Heart right ventricle (tissue), 16 donors: ENCODE measurements at regions of chr15 and their contacts with region 1.

Region 1: DNA sequence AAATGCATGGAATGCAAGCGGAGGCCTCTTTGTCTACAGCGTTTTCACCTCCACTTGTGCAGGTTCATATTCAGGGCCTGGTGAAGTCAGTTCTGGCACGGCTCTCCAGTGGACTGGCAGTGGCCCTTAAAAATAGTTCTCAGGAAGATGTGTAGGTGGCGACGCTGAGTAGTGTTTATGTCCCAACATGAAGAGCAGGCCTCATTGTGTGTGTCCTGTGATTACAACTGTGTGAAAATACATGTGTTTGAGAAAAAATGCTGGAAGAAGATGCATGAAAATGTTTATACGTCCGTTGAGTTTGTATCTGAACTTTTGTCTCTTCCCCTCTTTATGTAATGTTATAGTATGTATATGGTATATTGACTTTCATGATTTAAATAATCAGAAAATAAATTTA is 7.2 kb downstream of the LIPC start:
- DNase-seq: peak in 1 of 2 donors; percentile 65
- ATAC-seq: peak; percentile 56 to 89 (median 76)
- H3K4me3 ChIP-seq: no peak overlapping the region
- H3K27ac ChIP-seq: peak overlapping the region in 8 of 10 donors; percentile 75 to 89 (median 84)
- H3K4me1 ChIP-seq: peaks cover 23 to 47% (median 40%) of the 10 kb centered on the region in 9 donors
- H3K27me3 ChIP-seq: no peaks in the 10 kb centered on the region
- CTCF ChIP-seq: peak in 5 of 9 donors; percentile 30 to 57 (median 50)

Region 2: GRCh38 chr15:57994221-57995049 is 444.5 kb before region 1 on chr15:
- intact Hi-C with region 1: no loop called
- DNase-seq: no peak
- ATAC-seq: no peak
- H3K4me3 ChIP-seq: no peak overlapping the region
- H3K27ac ChIP-seq: no peak overlapping the region
- H3K4me1 ChIP-seq: no peaks in the 10 kb centered on the region
- H3K27me3 ChIP-seq: peaks cover 0 to 10% (median 0%) of the 10 kb centered on the region in 7 donors
- CTCF ChIP-seq: no peak

Region 3: GRCh38 chr15:58269455-58270414 is 169.2 kb before region 1 on chr15:
- intact Hi-C with region 1: loop called in 2 of 10 experiments (anchors 5 to 10 kb)
- DNase-seq: peak in 1 of 2 donors; percentile 56
- ATAC-seq: peak; percentile 77 to 96 (median 92)
- H3K4me3 ChIP-seq: no peak overlapping the region
- H3K27ac ChIP-seq: no peak overlapping the region
- H3K4me1 ChIP-seq: peaks cover 0 to 10% (median 0%) of the 10 kb centered on the region in 9 donors
- H3K27me3 ChIP-seq: no peaks in the 10 kb centered on the region
- CTCF ChIP-seq: peak; percentile 60 to 86 (median 79)

Region 4: GRCh38 chr15:58331903-58332675 is 106.9 kb before region 1 on chr15:
- intact Hi-C with region 1: loop called in 2 of 10 experiments (anchors 5 to 10 kb)
- DNase-seq: peak; percentile 90 to 96
- ATAC-seq: peak; percentile 96 to 98 (median 98)
- H3K4me3 ChIP-seq: peak overlapping the region in 3 of 10 donors; percentile 1 to 8 (median 1)
- H3K27ac ChIP-seq: peak overlapping the region; percentile 79 to 95 (median 88)
- H3K4me1 ChIP-seq: peaks cover 18 to 47% (median 38%) of the 10 kb centered on the region in 9 donors
- H3K27me3 ChIP-seq: no peaks in the 10 kb centered on the region
- CTCF ChIP-seq: no peak

Region 5: DNA sequence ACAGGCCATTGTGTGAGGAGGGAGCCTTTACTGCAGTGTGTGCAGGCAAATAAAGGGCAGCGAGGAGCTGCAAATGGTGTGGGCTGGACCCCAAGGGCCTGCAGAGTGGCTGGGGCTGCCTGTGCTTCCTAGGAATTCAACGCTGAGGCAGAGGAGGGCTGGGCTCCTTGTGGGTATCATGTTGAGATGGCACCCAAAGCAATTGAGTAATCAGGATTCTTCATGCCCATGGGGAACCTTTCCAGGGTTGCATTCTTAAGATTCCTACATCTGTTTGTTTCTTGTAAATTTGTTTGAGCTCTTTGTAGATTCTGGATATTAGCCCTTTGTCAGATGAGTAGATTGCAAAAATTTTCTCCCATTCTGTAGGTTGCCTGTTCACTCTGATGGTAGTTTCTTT is 92.6 kb before region 1 on chr15:
- intact Hi-C with region 1: no loop called
- DNase-seq: no peak
- ATAC-seq: no peak
- H3K4me3 ChIP-seq: no peak overlapping the region
- H3K27ac ChIP-seq: no peak overlapping the region
- H3K4me1 ChIP-seq: no peaks in the 10 kb centered on the region
- H3K27me3 ChIP-seq: no peaks in the 10 kb centered on the region
- CTCF ChIP-seq: no peak

Region 6: DNA sequence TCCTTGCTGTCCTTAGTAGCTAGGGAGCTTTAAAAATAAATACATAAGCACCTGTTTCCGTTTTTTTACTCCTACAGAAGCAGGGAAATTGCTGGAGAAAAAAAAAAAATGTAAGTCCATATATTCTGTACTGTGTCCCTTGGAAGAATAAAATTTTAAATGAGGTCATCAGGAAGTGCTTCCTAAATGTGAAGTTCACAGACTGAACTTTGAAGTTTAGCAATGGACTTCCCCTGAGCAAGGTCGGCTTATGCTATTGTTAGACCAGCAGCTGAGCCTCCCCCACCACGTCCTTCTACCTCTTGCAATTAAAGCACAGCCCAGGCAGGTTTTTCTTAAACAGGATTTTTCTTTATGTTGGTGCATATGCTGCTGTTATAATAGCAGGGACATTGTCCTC is 19.1 kb after region 1 on chr15:
- intact Hi-C with region 1: loop called in 2 of 10 experiments (anchors 1 to 2 kb)
- DNase-seq: peak in 1 of 2 donors; percentile 42
- ATAC-seq: peak in 7 of 8 donors; percentile 53 to 83 (median 79)
- H3K4me3 ChIP-seq: no peak overlapping the region
- H3K27ac ChIP-seq: peak overlapping the region; percentile 21 to 86 (median 74)
- H3K4me1 ChIP-seq: peaks cover 15 to 61% (median 43%) of the 10 kb centered on the region in 9 donors
- H3K27me3 ChIP-seq: no peaks in the 10 kb centered on the region
- CTCF ChIP-seq: no peak

Region 7: DNA sequence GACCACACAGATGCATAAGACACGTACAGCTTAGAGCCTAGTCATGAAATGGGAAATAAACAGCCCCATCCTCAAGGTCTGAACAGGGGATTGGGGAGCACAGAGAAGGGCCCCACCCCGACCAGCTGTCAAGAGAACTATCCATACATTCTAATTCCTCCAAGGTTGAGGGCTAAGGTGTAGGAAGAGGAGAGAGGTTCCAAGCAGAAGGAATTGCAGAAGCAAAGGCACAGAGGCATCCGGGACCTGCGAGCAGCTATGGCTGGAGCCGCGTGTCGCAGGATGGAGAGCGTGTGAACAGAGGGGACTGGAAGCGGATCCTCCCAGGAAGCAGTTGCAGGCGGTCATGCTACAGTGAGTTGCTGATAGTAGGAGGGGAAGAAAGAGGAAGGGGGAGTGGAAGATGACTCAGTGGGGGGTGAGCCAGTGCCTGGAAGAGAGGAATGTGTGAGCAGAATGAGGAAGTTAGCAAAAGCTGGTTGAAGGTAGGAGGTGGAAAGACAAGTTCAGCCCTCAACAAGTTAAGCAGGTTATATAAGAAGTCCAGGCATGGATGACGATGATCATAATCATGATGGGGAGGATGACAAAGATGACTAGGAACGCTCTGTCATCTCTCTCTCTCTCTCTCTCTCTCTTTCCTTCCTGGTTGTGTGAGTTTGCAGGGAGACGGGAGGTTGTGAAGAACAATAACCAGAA is 82.5 kb after region 1 on chr15:
- intact Hi-C with region 1: loop called in 2 of 10 experiments (anchors 10 kb)
- DNase-seq: peak; percentile 33 to 38
- ATAC-seq: peak in 5 of 8 donors; percentile 5 to 66 (median 52)
- H3K4me3 ChIP-seq: no peak overlapping the region
- H3K27ac ChIP-seq: peak overlapping the region in 7 of 10 donors; percentile 5 to 72 (median 45)
- H3K4me1 ChIP-seq: peaks cover 0 to 96% (median 44%) of the 10 kb centered on the region in 9 donors
- H3K27me3 ChIP-seq: no peaks in the 10 kb centered on the region
- CTCF ChIP-seq: no peak

Region 8: GRCh38 chr15:58551764-58552504 is 113.0 kb after region 1 on chr15:
- intact Hi-C with region 1: loop called in 1 of 10 experiments (anchors 5 kb)
- DNase-seq: no peak
- ATAC-seq: peak in 3 of 8 donors; percentile 3 to 38 (median 15)
- H3K4me3 ChIP-seq: peak overlapping the region in 5 of 10 donors; percentile 18 to 35 (median 24)
- H3K27ac ChIP-seq: peak overlapping the region in 2 of 10 donors; percentile 13 to 28
- H3K4me1 ChIP-seq: peaks cover 0 to 39% (median 15%) of the 10 kb centered on the region in 9 donors
- H3K27me3 ChIP-seq: no peaks in the 10 kb centered on the region
- CTCF ChIP-seq: no peak

Region 9: DNA sequence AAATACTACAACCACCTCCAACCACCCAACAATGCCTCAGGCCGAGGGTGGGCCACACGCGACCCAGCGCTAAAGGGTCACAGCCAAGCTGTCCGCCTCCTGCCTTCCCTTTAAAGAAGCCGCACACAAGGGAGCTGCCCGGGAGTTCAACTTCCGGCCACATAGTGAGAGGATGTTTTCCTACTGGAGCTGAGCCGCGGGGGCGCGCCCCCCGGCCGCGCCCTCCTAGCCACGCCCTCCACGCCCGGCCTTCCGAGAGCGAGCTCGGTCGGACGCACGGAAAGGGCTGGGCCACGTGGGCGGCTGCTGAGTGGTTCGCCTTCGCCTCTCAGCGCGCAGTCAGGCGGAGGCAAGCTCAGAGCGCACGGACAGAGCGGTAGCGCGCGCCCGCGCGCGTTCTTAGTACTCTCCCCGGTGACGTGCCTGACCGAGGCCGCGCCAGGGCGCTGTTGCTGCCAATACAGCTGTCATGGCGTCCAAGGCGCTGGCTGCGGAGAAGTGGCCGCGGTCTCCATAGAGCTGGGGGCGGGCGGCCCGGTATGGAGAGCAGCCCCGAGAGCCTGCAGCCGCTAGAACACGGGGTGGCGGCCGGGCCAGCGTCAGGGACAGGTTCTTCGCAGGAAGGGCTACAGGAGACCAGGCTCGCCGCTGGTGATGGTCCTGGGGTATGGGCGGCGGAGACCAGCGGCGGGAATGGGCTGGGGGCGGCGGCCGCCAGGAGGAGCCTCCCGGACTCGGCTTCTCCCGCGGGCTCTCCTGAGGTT is 332.1 kb after region 1 on chr15 and contains the start of gene MINDY2:
- intact Hi-C with region 1: loop called in 1 of 10 experiments (anchors 10 kb)
- DNase-seq: peak; percentile 97 to 99
- ATAC-seq: peak; percentile 97 to 99 (median 98)
- H3K4me3 ChIP-seq: peak within 1 kb of the TSS; percentile 77 to 100 (median 90)
- H3K27ac ChIP-seq: peak within 1 kb of the TSS; percentile 89 to 99 (median 98)
- H3K4me1 ChIP-seq: peaks cover 2 to 52% (median 46%) of the 10 kb centered on the region in 9 donors
- H3K27me3 ChIP-seq: no peaks in the 10 kb centered on the region
- CTCF ChIP-seq: peak in 8 of 9 donors; percentile 0 to 55 (median 42)
- total RNA-seq, gene MINDY2: 26.9 to 37.4 (median 32.7) TPM